Posterior cingulate gyrus (tissue), 11 donors: ENCODE measurements at regions of chr1 and their contacts with region 1.

Region 1: DNA sequence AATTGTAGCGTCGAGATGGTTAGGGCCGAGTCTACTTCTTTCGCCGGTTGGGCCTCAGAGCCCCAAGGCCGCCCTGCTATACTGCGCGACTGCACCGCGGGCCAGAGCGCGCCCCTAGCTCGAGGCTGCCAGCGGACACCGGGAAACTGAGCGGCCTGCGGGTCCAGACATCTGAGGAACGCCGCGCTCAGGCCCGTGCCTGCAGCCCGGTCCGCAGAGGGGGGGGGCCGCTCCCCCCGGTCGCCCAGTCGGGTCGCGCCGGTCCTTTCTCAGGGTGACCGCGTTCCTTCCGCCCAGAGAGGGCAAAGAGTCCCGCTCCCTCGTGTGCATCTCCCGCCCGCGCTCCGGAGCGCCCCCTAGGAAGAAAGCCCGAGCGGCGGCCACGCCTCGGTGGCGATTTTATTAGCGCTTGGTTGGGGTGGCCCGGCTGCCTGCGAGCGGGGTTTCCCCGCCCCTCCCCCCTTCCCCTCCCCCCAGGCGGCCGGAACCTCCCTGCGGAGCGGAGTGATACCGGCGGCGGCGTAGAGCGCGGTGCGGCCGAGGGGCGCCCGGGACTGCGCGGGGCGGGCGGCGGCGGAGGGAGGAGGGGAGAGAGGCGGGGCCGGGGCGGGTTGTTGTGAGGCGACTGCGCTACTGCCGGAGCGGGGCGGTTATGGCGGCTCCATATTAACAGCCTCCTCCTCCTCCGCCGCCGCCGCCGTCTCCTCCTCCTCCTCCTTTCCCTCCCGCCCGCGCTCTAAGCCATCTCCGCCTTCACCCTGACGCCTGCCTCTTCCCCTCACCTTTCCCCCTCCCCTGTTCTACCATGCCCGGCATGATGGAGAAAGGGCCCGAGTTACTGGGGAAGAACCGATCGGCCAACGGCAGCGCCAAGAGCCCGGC is at the start of gene RCOR3:
- DNase-seq: peak; percentile 85 to 99 (median 90)

Region 2: DNA sequence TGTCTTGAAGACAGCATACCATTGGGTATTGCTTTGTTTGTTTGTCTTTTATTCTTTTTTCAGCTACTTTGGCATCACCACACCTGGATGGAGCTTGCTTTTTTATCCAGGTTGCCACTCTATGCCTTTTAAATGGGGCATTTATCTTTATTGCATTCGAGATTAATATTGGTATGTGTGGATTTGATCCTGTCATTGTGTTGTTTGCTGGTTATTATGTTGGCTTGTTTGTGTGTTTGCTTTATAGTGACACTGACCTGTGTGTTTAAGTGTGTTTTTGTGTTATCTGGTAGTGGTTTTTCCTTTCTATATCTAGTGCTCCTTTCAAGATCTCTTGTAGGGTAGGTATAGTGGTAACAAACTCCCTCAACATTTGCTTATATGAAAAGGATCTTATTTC is 100.1 kb before region 1 on chr1:
- intact Hi-C with region 1: no loop called
- DNase-seq: no peak

Region 3: GRCh38 chr1:211382714-211383480 is 123.9 kb after region 1 on chr1:
- intact Hi-C with region 1: loop called (anchors 2 kb)
- DNase-seq: peak; percentile 89 to 99 (median 94)